ENCODE measurements at regions of chr11 and their contacts with region 1.

Region 1: DNA sequence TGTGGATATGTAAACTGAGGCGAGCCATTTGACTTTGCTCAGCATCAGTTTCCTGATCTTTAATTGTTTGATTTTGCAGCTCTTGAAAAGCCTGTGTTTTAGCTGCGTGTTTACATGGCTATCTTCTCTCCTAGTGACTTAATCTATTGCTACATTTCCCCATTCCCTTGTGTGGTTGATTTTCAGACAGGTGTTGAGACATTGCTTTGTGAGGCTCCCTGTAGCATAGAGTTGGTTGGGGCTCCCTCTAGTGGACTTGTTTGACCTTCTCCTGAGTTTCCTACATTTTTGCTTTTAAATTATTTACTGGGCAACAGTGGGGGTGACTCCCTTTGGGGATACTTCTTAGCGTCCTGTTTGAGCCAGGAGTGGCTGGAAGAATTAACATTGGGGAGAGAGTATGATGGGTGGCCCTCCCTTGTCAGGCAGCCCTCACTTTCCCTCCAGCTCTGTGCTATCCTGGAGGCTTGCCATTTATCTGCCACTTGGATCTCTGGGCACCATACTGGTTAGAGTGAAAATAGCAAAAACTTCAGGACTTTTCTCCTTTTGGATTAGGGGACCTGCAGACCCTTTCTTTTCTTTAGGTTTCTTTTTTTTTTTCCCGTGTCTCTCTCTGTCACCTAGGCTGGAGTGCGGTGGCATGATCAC is 9.2 kb upstream of the CBL start:
- DNase-seq: peak; percentile 80
- ATAC-seq: peak; percentile 97
- H3K4me3 Mint-ChIP-seq: no peak overlapping the region
- H3K27ac Mint-ChIP-seq: no peak overlapping the region
- H3K4me1 Mint-ChIP-seq: peaks cover 2% of the 10 kb centered on the region
- H3K27me3 Mint-ChIP-seq: no peaks in the 10 kb centered on the region

Region 2: GRCh38 chr11:119101759-119102423 is 95.1 kb before region 1 on chr11 and contains the start of gene DPAGT1:
- CTCF ChIA-PET with region 1: interaction called, 5 read pairs
- POLR2A ChIA-PET with region 1: no interaction called
- intact Hi-C with region 1: loop called in 1 of 2 experiments (anchors 5 kb)
- DNase-seq: peak; percentile 93
- ATAC-seq: peak; percentile 86
- H3K4me3 Mint-ChIP-seq: peak within 1 kb of the TSS; percentile 95
- H3K27ac Mint-ChIP-seq: peak within 1 kb of the TSS; percentile 100
- H3K4me1 Mint-ChIP-seq: peaks cover 42% of the 10 kb centered on the region
- H3K27me3 Mint-ChIP-seq: no peaks in the 10 kb centered on the region
- total RNA-seq, gene DPAGT1: 57.8 to 73.5 TPM

Region 3: DNA sequence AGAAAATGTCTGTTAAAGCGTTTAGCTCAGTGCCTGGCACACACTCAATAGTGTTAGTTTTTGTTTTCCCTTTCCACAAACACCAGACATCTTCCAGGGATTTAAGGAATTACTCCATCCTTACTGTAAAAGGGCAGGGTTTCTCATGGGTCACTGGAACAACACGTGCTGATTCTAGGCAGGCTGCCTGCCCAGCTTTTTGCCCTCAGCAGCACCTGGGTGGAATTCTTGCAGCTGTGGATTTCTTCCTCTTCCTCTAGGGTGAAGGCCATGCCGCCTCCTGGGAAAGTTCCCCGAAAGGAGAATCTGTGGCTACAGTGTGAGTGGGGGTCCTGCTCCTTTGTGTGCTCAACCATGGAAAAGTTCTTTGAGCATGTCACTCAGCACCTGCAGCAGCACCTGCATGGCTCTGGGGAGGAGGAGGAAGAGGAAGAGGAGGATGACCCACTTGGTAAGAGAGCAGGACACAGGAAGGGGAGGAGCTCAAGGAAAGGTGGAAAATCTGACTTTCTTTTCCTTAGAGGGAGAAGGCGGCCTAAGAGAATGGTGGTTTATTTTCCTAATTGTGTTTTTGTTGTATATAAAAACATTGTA is 70.2 kb before region 1 on chr11:
- CTCF ChIA-PET with region 1: no interaction called
- POLR2A ChIA-PET with region 1: no interaction called
- intact Hi-C with region 1: loop called in 1 of 2 experiments (anchors 5 kb)
- DNase-seq: no peak
- ATAC-seq: no peak
- H3K4me3 Mint-ChIP-seq: no peak overlapping the region
- H3K27ac Mint-ChIP-seq: peak overlapping the region; percentile 70
- H3K4me1 Mint-ChIP-seq: peaks cover 25% of the 10 kb centered on the region
- H3K27me3 Mint-ChIP-seq: no peaks in the 10 kb centered on the region

Region 4: DNA sequence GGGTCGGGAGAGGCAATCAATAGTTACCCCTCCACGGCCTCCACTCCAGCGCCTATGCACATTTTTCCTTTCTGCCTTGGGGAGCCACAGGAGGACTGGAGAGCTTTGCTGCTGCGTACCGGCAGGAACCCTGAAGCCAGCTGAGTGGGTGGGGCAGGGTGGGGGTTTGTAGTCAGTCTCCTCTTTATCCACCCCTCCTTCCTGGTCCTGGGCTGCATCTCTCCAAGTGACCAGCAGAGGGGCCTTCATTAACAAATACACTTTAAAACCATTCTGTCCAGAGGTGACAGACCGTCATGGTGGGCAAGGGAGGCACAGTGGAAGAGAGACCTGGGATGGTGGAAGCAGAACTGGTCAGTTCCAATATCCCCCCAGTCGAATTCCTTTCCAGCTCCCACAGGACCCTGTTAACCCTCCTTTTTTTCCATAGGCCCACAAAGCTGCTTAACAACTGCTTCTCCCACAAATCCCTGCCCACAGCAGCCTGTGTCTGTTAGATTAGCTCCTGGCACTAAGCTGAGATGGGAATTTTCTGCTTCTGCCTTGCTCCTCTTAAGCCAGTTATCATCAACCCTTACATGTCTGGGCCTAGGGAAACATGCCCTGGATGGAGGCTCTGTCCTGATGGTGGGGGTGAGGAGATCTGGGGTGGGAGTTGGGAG is 52.0 kb before region 1 on chr11:
- CTCF ChIA-PET with region 1: interaction called, 6 read pairs
- POLR2A ChIA-PET with region 1: interaction called, 3 read pairs
- intact Hi-C with region 1: loop called in 1 of 2 experiments (anchors 2 kb)
- DNase-seq: peak; percentile 58
- ATAC-seq: peak; percentile 35
- H3K4me3 Mint-ChIP-seq: no peak overlapping the region
- H3K27ac Mint-ChIP-seq: no peak overlapping the region
- H3K4me1 Mint-ChIP-seq: peaks cover 8% of the 10 kb centered on the region
- H3K27me3 Mint-ChIP-seq: peaks cover 33% of the 10 kb centered on the region

Region 5: DNA sequence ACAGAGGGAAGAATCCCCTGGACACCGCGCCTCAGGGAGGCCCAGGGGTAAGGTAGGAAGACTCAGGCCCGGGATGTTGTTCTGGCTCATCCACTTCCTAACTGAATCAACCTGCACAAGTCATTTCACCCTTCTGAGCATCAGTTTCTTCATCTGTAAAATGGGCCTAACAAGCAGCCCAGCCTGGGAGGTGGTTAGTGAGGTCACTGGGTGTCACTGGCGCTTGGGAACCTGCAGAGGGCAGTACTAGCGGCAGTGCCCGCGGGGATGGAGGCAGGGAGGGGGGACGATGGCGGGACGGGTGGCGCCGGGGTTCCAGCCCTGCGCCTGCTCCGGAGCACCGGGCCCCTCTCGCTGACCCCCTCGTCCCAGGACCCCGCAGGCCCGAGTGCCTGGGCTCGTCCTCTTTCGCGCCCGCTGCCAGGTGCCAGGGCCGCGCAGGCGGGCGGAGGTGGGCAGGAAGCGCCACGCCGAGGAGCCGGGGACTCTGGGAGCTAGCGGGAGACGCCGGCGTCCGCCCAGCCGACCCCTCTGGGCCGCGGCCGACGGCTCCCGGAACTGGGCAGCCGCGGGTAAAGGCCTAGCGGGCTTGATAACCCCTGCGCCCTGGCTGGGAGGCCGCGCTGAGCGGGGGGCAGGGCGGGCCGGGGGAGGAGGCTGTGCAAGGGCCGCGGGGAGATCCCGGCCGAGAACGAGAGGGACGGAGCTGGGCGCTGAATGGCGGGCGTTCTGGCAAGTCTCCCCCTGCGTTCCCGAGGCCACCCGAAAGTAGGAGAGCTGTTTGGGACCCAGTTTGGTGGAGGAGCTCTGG is 28.3 kb before region 1 on chr11 and contains the start of gene NLRX1:
- CTCF ChIA-PET with region 1: interaction called, 24 read pairs
- POLR2A ChIA-PET with region 1: no interaction called
- intact Hi-C with region 1: loop called (anchors 1 to 2 kb)
- DNase-seq: peak; percentile 93
- ATAC-seq: peak; percentile 94
- H3K4me3 Mint-ChIP-seq: peak within 1 kb of the TSS; percentile 88
- H3K27ac Mint-ChIP-seq: peak within 1 kb of the TSS; percentile 90
- H3K4me1 Mint-ChIP-seq: peaks cover 11% of the 10 kb centered on the region
- H3K27me3 Mint-ChIP-seq: no peaks in the 10 kb centered on the region
- total RNA-seq, gene NLRX1: 18.2 to 25.0 TPM

Region 6: DNA sequence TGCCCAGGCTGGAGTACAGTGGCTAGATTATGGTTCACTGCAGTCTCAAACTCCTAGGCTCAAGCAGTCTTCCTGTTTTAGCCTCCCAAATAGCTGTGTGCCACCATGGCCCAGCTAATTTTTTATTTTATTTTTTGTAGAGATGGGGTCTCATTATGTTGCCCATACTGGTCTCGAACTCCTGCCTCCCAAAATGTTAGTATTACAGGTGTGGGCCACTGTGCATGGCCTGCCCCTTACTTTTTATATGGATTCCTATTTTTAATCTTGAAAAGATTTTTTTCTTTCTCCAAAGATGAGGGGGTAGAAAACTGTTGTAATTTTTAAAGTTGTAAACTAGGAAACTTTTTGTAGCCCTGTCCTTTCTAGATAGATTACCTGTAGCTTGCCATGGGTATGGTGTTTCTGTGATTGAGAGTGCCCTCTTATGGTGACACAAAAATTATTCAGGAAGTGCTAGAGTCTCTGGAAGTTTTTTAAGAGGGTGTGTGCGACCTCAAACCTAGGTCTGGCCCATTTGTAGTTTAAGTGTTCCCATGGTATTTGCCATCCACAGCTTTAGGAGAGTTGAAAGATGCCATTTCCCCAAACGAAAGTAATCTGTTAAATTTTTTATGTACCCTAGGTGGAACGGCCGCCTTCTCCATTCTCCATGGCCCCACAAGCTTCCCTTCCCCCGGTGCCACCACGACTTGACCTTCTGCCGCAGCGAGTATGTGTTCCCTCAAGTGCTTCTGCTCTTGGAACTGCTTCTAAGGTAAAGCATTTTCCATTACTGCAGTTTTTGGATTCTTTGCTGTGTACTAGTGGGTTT is 87.6 kb after region 1 on chr11:
- CTCF ChIA-PET with region 1: interaction called, 7 read pairs
- POLR2A ChIA-PET with region 1: no interaction called
- intact Hi-C with region 1: loop called in 1 of 2 experiments (anchors 2 kb)
- DNase-seq: no peak
- ATAC-seq: peak; percentile 94
- H3K4me3 Mint-ChIP-seq: no peak overlapping the region
- H3K27ac Mint-ChIP-seq: peak overlapping the region; percentile 47
- H3K4me1 Mint-ChIP-seq: peaks cover 19% of the 10 kb centered on the region
- H3K27me3 Mint-ChIP-seq: no peaks in the 10 kb centered on the region

Region 7: DNA sequence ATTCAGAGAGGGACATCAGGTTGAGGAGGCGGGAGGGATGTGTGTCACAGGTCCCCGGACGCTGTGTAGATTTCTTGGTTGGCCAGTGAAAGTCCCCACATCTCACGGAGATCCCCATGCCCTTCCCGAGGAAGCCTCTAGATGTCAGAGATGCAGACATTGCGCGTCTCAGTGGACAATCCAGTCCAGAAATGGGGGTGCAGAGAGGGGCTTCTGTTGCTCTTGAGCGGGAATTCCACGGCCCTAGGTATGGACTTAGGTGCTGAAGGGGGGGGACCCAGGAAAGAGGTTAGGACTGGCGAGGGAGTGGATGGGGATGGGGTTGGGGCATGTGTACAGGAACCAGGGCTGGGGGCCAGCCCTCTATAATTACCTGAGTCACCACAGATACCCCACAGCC is 219.0 kb after region 1 on chr11:
- CTCF ChIA-PET with region 1: no interaction called
- POLR2A ChIA-PET with region 1: no interaction called
- intact Hi-C with region 1: no loop called
- DNase-seq: no peak
- ATAC-seq: no peak
- H3K4me3 Mint-ChIP-seq: no peak overlapping the region
- H3K27ac Mint-ChIP-seq: no peak overlapping the region
- H3K4me1 Mint-ChIP-seq: no peaks in the 10 kb centered on the region
- H3K27me3 Mint-ChIP-seq: peaks cover 13% of the 10 kb centered on the region

Measured in activated CD4-positive, alpha-beta T cell treated with anti-CD3 and anti-CD28 coated beads for 36 hours (primary cell).